GM18951 (cell line): ENCODE measurements at regions of chr16 and their contacts with region 1.

Region 1: DNA sequence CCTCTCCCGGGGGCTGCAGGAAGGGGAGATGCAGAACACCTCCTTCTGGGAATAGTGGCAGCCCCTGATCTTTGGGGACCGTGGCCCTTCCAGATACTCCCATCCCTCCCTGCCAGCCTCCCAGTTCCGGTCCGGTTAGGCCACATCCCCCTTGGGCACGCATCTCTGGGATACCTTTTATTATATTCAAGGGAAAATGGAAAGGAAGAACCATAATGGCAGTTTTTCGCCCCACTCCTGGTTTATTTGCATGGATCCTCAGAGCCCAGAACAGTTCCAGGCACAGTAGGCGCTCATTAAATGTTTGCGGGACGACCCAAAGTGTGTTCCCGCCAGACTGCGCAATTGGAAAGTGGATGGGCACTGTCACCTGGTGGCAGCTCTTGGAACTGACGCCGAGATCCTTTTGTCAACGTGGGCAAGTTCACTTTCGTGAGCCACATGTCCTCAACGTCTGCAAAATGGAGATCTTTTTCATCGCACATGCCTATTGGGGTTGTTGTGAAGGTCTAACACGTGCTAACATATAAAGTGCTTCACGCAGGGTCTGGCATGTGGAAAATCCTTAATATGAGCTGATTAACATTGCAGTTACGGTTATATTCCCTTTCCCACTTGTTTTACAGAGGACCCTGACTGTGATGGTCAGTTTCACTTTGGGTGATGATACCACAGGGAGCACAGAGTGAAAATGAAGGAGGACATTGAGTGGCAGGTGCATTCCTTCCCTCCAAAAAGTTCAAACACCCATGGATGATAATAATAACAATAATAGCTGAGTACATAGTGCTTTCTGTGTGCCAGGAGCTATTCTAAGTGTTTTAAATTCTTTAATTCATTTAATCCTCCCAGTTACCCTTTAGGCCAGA is 1.7 kb upstream of the GPRC5B start:
- POLR2A ChIP-seq: no peak

Region 2: GRCh38 chr16:19601083-19601976 is 285.0 kb before region 1 on chr16:
- in situ Hi-C with region 1: loop called (anchors 10 kb)
- POLR2A ChIP-seq: no peak

Region 3: GRCh38 chr16:19717771-19718602 is 168.3 kb before region 1 on chr16 and contains the starts of genes IQCK and KNOP1:
- in situ Hi-C with region 1: loop called (anchors 25 kb)
- POLR2A ChIP-seq: peak; percentile 74

Region 4: DNA sequence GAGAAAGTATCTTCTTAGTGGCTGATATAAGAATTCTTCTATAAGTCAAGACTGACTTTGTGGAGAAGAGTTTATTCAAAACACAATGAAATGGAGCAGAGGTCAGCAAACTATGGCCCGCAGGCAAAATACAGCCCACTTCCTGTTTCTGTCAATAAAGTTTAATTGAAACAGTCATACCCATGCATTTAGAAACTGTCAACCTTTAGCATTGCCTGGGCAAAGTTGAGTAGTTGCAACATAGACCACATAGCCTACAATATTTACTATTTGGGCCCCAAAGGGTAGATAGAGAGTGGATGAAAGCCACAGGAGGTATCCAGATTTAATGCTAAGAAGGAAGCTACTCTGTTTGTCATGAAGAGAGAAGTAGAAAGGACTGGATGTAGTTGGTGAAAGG is 651.9 kb after region 1 on chr16:
- in situ Hi-C with region 1: no loop called
- POLR2A ChIP-seq: no peak